Esophagus squamous epithelium (tissue), 5 donors: ENCODE measurements at regions of chr7 and their contacts with region 1.

Region 1: GRCh38 chr7:70975754-70976153 is 156.2 kb upstream of the GALNT17 start:
- DNase-seq: no peak
- H3K4me3 ChIP-seq: no peak overlapping the region
- H3K27ac ChIP-seq: no peak overlapping the region
- H3K4me1 ChIP-seq: no peaks in the 10 kb centered on the region
- H3K27me3 ChIP-seq: no peaks in the 10 kb centered on the region
- CTCF ChIP-seq: no peak
- POLR2A ChIP-seq: no peak

Region 2: GRCh38 chr7:70953796-70954195 is 22.0 kb before region 1 on chr7:
- intact Hi-C with region 1: loop called (anchors 2 kb)
- DNase-seq: no peak
- H3K4me3 ChIP-seq: no peak overlapping the region
- H3K27ac ChIP-seq: no peak overlapping the region
- H3K4me1 ChIP-seq: no peaks in the 10 kb centered on the region
- H3K27me3 ChIP-seq: no peaks in the 10 kb centered on the region
- CTCF ChIP-seq: no peak
- POLR2A ChIP-seq: no peak

Region 3: GRCh38 chr7:71106226-71106625 is 130.5 kb after region 1 on chr7:
- intact Hi-C with region 1: no loop called
- DNase-seq: no peak
- H3K4me3 ChIP-seq: no peak overlapping the region
- H3K27ac ChIP-seq: no peak overlapping the region
- H3K4me1 ChIP-seq: no peaks in the 10 kb centered on the region
- H3K27me3 ChIP-seq: no peaks in the 10 kb centered on the region
- CTCF ChIP-seq: no peak
- POLR2A ChIP-seq: no peak

Region 4: DNA sequence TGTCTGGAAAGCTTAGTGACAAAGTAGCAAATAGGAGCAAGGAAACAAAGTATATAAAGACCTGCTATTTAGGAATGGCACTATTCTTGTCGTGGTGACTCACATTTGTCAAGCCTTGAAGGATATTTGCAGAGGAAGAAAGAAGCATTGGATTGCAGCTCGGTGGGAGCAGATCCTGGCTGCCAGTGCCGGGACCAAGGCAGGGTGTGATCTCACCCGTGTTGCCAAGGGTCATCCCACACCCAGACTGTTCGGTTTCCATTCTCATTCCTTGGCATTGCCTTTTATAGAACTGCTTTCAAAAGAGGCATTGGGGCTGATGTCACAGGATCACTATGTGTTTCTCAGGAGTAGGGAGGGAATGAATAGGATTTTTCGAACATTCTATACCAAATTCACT is 332.3 kb after region 1 on chr7:
- intact Hi-C with region 1: no loop called
- DNase-seq: no peak
- H3K4me3 ChIP-seq: no peak overlapping the region
- H3K27ac ChIP-seq: peak overlapping the region in 3 of 4 donors; percentile 65 to 78 (median 69)
- H3K4me1 ChIP-seq: peaks cover 0 to 10% (median 0%) of the 10 kb centered on the region in 3 donors
- H3K27me3 ChIP-seq: no peaks in the 10 kb centered on the region
- CTCF ChIP-seq: no peak
- POLR2A ChIP-seq: no peak

Region 5: DNA sequence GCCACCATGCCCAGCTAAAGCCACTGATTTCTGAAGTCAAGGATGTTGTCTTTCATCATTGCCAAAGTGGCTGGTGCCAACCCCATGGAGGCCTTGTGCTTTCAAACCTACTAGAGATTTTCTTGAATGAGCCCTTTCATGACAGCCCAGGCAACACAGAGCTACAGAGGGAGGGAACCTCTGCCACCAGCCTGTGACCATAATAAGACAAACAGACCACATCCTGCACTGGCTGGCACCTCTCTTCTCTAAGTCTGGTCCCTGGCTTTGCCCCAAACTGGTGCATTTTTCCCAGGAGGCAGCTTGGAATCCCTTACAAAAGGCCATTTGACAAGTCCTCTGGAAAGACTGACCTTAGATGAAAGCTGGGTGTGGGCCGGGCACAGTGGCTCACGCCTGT is 505.0 kb after region 1 on chr7:
- intact Hi-C with region 1: no loop called
- DNase-seq: no peak
- H3K4me3 ChIP-seq: no peak overlapping the region
- H3K27ac ChIP-seq: peak overlapping the region in 1 of 4 donors; percentile 4
- H3K4me1 ChIP-seq: peaks cover 0 to 11% (median 0%) of the 10 kb centered on the region in 3 donors
- H3K27me3 ChIP-seq: no peaks in the 10 kb centered on the region
- CTCF ChIP-seq: no peak
- POLR2A ChIP-seq: no peak

Region 6: DNA sequence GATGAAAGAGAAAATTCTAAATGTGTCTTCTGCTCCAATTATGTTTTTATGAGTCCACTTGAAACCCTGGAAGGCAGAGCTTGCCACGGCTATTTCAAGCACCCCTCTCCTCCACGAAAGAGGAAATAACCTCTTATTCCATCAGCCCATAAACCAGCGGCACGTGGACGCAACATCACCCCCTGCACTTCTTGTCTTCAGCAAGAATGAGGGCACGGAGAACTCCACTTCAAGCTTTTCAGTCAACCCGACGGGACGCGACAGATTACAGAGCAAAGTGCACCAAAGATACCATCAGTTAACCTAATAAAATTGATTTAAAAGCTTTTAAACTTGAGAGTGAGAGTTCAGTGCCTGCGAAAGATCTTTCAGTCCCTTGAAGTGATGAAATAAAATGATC is 562.5 kb after region 1 on chr7:
- intact Hi-C with region 1: no loop called
- DNase-seq: no peak
- H3K4me3 ChIP-seq: no peak overlapping the region
- H3K27ac ChIP-seq: no peak overlapping the region
- H3K4me1 ChIP-seq: peaks cover 0 to 1% (median 0%) of the 10 kb centered on the region in 3 donors
- H3K27me3 ChIP-seq: no peaks in the 10 kb centered on the region
- CTCF ChIP-seq: no peak
- POLR2A ChIP-seq: no peak